ENCODE measurements at regions of chr17 and their contacts with region 1.

Region 1: DNA sequence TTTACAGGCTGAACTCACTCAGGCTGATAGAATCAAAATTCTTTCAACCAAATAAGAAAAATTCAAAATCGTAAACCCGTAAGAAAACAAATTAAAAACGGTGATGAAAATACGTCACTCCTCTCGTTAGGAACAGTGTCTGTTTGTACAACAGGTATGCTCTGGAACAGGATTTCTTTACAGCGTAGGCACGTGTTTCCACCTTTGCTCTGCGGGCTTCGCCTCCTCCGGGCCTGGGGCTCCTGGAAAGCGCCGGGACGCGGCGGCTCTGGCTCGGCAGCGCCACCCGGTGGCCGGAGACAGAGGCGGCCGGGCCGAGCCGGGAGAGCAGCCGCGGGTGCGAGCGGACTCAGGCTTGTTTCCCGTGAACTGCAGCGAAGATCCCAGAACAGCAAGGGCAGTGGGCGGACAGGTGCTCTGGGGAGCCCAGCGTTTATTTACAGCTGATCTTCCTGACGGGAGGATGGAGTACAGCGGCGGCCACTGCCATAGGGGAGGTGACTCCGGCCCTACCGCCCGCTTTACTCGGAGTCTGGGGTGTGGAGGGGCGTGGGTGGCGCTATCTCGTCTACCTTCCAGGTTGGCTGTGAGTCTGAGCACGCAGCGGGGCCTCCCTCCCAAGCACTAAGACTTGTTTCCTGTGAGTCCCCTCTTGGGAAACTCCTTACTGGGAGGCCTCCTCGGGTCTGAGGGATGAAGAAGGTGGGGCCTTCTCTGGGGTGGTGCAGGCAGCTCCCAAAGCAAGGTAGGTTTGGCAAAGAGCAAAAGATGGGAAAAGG is 40.5 kb upstream of the ATP2A3 start:
- DNase-seq: peak; percentile 78
- H3K4me3 ChIP-seq: no peak overlapping the region
- H3K27ac ChIP-seq: peak overlapping the region; percentile 72 to 79 (median 78)
- H3K4me1 ChIP-seq: peaks cover 8 to 23% (median 15%) of the 10 kb centered on the region in 4 donors
- H3K27me3 ChIP-seq: no peaks in the 10 kb centered on the region
- CTCF ChIP-seq: peak; percentile 94 to 99 (median 97)
- EP300 ChIP-seq: no peak
- POLR2A ChIP-seq: no peak

Region 2: DNA sequence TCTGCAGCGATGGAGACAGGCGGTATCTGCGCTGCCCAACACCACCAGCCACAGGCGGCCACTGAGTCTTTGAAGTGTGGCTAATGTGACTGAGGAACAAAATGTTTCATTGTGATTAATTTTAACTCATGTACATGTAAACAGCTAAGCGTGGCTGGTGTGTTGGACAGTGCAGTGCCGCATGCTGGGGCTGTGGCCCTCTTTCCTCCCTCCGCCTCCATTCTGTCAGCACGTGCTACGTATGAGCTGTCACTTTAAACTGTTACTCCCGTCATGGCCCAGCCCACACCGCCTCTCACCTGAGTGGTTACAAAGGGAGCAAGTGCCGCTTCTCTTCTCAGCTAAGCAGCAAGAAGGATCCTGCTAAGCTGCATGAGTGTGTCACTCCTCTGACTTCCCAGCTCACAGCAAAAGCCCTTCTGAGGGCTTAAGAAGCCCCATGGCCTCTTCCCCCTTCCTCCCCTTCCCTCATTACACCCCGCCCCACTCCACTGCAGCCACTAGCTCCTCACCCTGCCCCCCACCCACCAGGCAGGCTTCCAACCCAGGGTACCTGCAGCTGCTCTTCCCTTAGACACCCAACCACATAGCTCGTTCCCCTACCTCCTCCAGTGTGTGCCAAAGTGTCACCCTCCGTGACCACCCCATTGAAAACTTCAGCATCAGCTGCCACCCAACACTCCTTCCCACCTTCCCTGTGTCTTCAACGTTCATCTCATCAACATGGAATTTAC is 266.0 kb before region 1 on chr17:
- in situ Hi-C with region 1: no loop called
- intact Hi-C with region 1: loop called (anchors 10 kb)
- DNase-seq: peak; percentile 68
- H3K4me3 ChIP-seq: no peak overlapping the region
- H3K27ac ChIP-seq: peak overlapping the region; percentile 24 to 45 (median 42)
- H3K4me1 ChIP-seq: peaks cover 8 to 21% (median 15%) of the 10 kb centered on the region in 4 donors
- H3K27me3 ChIP-seq: no peaks in the 10 kb centered on the region
- CTCF ChIP-seq: no peak
- EP300 ChIP-seq: no peak
- POLR2A ChIP-seq: no peak

Region 3: GRCh38 chr17:3865176-3865575 is 139.5 kb before region 1 on chr17:
- in situ Hi-C with region 1: no loop called
- intact Hi-C with region 1: loop called (anchors 10 kb)
- DNase-seq: no peak
- H3K4me3 ChIP-seq: no peak overlapping the region
- H3K27ac ChIP-seq: peak overlapping the region in 1 of 4 donors; percentile 3
- H3K4me1 ChIP-seq: peaks cover 0 to 7% (median 0%) of the 10 kb centered on the region in 4 donors
- H3K27me3 ChIP-seq: no peaks in the 10 kb centered on the region
- CTCF ChIP-seq: no peak
- EP300 ChIP-seq: no peak
- POLR2A ChIP-seq: no peak

Region 4: DNA sequence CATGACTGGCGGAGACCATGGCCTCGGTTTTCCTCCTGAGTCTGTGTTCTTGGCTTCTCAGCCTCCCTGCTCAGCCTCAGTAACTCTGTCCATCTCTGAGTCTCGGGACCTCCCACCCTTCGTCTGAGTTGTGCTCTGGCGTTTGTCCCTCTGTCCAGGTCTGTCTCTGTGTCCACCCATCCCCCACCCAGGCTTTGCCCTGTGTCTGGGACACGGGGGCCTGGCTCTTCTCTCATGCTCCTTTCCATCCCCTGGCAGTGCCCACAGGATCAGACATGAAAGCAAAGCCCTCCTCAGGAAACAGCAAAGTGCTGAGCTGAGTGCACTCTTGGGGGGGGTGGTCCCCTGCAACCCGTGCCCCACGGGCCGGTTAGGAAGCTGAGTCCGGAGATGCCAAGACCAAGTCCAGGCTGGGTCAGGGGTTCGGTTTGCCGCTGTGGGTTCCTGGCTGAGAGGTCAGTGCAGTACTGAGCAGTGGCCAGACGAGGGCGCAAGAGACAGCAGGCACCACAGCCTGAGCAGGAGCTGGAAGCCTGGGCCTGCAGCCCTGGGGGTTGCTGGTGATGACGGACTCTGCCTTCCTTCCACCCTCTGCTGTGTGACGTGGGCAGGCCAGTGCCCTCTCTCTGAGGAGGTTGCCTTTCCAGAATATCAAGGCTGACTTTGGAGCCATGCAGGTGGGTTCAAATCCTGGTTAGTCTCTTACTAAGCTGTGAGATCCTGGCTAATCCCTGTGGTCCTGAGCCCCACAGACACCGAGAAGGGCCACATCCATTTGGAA is 91.0 kb before region 1 on chr17:
- in situ Hi-C with region 1: loop called in 1 of 4 experiments (anchors 10 kb)
- intact Hi-C with region 1: loop called (anchors 10 kb)
- DNase-seq: peak; percentile 88
- H3K4me3 ChIP-seq: no peak overlapping the region
- H3K27ac ChIP-seq: peak overlapping the region; percentile 53 to 82 (median 80)
- H3K4me1 ChIP-seq: peaks cover 29 to 45% (median 35%) of the 10 kb centered on the region in 4 donors
- H3K27me3 ChIP-seq: no peaks in the 10 kb centered on the region
- CTCF ChIP-seq: peak; percentile 96 to 98 (median 98)
- EP300 ChIP-seq: no peak
- POLR2A ChIP-seq: no peak

Region 5: DNA sequence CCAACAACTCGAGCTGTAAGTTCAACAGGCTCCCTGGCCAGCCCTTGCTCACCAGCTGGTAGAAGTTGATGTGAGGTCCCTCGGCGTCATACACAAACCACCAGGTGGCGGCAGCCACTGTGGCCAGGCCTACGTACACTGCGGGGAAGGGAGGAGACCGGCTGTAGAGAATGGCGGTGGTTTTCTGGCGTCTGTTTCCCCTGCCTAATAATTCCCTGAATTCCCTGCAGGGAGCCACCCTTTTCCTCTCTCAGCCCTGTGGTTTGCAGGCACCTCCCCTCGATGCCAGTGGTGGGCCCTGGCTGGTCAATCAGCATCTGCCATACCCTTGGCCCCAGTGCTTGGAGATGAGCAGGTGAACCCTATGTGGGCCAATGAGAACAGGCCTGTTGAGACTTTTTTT is 69.6 kb before region 1 on chr17:
- in situ Hi-C with region 1: loop called in 1 of 4 experiments (anchors 10 kb)
- intact Hi-C with region 1: no loop called
- DNase-seq: peak; percentile 81
- H3K4me3 ChIP-seq: no peak overlapping the region
- H3K27ac ChIP-seq: no peak overlapping the region
- H3K4me1 ChIP-seq: peaks cover 0 to 3% (median 0%) of the 10 kb centered on the region in 4 donors
- H3K27me3 ChIP-seq: no peaks in the 10 kb centered on the region
- CTCF ChIP-seq: peak; percentile 49 to 81 (median 61)
- EP300 ChIP-seq: no peak
- POLR2A ChIP-seq: no peak